PC-3 (cell line): ENCODE measurements at regions of chr11 and their contacts with region 1.

Region 1: DNA sequence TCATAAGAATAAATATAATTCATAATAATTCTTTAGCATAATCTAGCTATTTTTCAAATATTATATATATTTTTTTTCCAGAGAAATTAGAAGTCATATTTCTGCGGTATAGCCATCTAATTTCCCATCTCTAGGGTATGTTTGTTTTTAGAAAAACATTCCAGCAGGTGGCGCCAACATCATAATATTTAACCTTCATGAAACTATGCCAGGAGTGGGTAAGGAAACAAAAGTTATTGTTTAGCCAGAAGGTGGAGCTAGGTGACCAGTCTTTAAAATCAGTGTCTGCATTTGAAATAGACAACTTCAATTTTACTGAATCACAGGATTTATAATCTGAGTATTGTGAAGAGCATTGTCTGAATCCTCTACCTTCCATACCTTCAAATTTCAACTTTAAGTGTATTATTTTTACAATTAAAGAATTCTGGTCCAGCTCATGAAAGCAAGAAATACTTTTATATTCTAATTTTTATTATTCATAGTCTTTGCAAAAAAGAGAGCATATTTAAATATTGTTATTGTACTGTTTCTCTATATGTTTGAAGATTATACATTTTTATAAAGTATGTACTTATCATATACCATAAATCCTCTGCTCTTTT is 15.7 kb upstream of the CCDC179 start:
- DNase-seq: peak; percentile 89
- ATAC-seq: peak; percentile 76
- H3K4me3 ChIP-seq: no peak overlapping the region
- H3K27ac ChIP-seq: no peak overlapping the region
- H3K4me1 ChIP-seq: no peaks in the 10 kb centered on the region
- H3K27me3 ChIP-seq: no peaks in the 10 kb centered on the region
- CTCF ChIP-seq: peak; percentile 87

Region 2: GRCh38 chr11:23010790-23011335 is 134.9 kb after region 1 on chr11:
- CTCF ChIA-PET with region 1: no interaction called
- POLR2A ChIA-PET with region 1: no interaction called
- intact Hi-C with region 1: loop called (anchors 5 kb)
- DNase-seq: no peak
- ATAC-seq: no peak
- H3K4me3 ChIP-seq: no peak overlapping the region
- H3K27ac ChIP-seq: no peak overlapping the region
- H3K4me1 ChIP-seq: peaks cover 22% of the 10 kb centered on the region
- H3K27me3 ChIP-seq: no peaks in the 10 kb centered on the region
- CTCF ChIP-seq: no peak

Region 3: DNA sequence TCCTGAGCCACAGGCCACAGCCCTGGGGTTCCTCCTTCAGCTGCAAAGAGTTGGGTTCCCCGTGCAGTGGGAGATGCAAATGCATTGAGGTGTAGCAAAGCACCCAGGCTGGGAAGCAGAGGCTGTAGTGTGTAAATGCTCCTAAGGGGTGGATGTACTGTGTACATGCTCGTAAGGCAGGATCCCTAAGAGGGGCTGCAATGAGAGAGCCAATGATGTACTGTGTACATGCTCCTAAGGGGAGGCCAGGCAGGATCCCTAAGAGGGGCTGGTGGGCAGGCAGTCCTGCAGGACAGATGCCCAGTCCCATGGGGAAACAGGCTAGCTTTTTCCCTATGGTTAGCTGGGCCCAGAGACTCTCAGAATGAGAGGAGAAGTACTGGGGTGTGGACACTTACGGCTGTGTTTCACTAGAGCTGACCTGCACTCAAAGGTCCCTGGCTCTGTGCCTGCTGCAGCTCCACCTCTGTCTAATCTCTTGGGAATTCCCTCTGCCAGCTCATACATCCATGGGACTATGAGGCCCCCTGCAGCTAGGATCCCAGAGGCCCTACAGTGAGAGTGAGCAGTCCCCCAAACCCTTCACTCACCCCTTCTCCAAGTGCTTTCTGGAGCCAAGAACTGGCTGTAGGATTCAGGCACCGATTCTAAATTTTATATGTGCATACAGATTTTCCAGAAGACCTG is 1359.0 kb after region 1 on chr11:
- CTCF ChIA-PET with region 1: no interaction called
- POLR2A ChIA-PET with region 1: no interaction called
- intact Hi-C with region 1: loop called (anchors 10 kb)
- DNase-seq: peak; percentile 42
- ATAC-seq: peak; percentile 77
- H3K4me3 ChIP-seq: no peak overlapping the region
- H3K27ac ChIP-seq: no peak overlapping the region
- H3K4me1 ChIP-seq: no peaks in the 10 kb centered on the region
- H3K27me3 ChIP-seq: no peaks in the 10 kb centered on the region
- CTCF ChIP-seq: peak; percentile 43; the same call in 1 of the 2 replicates

Region 4: DNA sequence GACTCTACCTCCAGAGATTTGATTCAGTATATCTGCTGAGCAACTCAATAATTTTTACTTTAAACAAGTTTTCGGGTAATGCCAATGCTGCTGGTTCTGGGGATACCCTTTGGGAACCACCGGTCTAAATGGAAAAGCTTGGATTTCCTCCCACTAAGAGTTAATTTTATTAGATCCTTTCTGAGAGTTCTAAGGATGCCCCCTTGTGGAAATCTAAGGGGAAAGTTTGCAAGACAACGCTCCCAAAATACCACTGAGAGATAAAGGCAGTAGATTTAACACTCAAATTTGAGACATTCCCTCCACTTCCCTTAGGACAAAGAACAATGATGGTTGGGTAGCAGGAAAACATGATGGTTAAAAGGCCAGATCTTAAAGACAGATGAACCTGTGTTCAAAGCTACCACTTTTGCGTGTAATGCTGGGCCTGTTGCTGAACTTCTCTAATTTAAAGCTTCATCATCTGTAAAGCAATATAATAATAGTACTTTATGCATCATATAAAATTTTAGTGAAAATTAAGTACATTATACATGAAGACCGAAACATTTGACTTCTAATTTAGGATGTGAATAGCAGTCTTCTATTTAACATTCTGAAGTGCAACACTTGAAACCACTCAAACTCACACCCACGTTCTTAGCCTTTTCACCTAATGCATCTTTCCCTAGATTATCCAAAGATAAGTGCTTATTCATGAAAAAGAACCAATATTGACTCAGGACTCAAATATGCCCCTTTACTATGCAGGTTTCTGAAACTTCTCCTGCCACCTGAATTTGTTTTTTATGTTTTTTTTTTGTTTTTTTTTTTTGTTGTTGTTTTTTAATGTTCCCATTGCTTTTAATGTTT is 1510.8 kb after region 1 on chr11:
- CTCF ChIA-PET with region 1: no interaction called
- POLR2A ChIA-PET with region 1: no interaction called
- intact Hi-C with region 1: loop called (anchors 1 kb)
- DNase-seq: peak; percentile 60
- ATAC-seq: peak; percentile 49
- H3K4me3 ChIP-seq: no peak overlapping the region
- H3K27ac ChIP-seq: no peak overlapping the region
- H3K4me1 ChIP-seq: peaks cover 11% of the 10 kb centered on the region
- H3K27me3 ChIP-seq: no peaks in the 10 kb centered on the region
- CTCF ChIP-seq: peak; percentile 71